Heart left ventricle (tissue), 16 donors: ENCODE measurements at regions of chr5 and their contacts with region 1.

Region 1: DNA sequence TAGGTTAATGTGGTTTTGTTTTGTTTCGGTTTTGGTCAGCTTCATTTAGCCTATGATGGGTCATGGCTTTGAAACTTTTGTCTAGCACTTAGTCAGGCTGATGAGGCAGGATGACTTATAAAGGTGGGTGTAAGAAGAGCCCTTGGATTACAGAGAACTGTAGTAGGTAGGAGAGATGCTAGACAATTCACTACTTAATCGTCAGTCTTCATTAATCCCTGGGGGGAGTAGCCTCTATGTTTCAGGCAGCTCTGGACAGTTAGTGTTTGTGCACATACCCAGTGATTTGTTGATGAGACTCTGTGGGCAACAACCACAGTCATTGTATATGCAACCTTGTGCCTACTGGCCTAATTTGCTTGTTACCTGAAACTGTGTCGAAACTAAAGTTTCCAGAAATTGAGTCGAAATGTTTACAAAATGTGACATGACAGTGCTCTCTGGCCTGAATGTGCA is 113.3 kb downstream of the MTREX start:
- DNase-seq: no peak
- ATAC-seq: no peak
- H3K4me3 ChIP-seq: no peak overlapping the region
- H3K27ac ChIP-seq: peak overlapping the region in 3 of 12 donors; percentile 18 to 46 (median 21)
- H3K4me1 ChIP-seq: peaks cover 0 to 43% (median 15%) of the 10 kb centered on the region in 12 donors
- H3K27me3 ChIP-seq: no peaks in the 10 kb centered on the region
- CTCF ChIP-seq: no peak
- POLR2A ChIP-seq: no peak

Region 2: DNA sequence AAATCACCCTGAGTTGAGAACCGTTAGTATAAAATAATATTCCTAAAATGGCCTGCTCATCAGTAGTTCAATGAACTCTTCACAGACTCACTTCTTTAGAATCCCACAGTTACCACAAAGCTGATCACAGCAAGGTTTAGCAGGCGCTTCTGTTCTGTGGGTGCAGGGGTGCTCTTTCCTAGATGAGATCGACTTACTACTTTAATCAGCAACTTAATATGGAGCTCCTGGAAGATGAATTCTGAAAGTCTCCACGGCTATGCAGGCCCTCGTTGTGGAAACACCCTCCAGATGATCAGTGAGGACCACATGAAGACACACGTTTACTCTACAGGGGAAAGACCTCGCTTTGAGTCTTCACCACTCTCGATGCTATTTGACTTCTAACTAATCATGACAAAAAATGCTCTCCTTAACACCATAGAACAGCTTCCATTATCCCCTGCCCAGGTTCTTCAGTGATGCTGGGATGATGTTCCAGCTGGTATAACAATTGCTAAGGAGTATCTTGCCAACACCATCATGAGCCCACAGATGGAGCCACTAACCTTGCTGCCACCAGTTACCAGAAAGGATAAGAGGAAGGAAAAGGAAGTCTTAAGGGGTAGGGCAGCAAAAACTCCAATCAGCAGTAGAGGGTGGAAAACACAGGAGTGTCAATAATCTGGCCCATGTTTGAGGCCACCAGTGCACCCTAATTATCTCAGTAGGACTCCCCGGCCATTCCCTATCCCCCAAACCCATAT is 279.0 kb before region 1 on chr5:
- intact Hi-C with region 1: no loop called
- DNase-seq: no peak
- ATAC-seq: no peak
- H3K4me3 ChIP-seq: no peak overlapping the region
- H3K27ac ChIP-seq: no peak overlapping the region
- H3K4me1 ChIP-seq: peaks cover 0 to 5% (median 0%) of the 10 kb centered on the region in 12 donors
- H3K27me3 ChIP-seq: peaks cover 0 to 20% (median 3%) of the 10 kb centered on the region in 9 donors
- CTCF ChIP-seq: no peak
- POLR2A ChIP-seq: no peak

Region 3: DNA sequence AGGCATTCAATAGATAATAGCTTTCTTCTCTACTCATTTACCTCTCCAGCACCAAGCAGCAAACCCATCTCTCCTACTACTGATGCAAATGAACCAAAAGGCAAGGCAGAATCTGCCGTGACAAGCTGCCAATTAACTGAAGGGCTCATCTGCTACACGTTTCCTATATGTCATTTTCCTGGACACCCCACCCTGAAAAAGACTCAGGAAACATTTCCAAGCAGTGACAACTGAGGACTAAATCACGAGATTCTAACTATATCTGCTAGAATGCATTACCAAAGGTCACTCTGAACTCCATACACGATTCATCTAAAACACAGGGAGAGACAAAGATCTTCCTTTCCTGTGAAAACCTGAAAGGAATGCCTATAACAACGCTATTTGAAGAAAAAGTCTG is 100.8 kb after region 1 on chr5:
- intact Hi-C with region 1: loop called in 2 of 10 experiments (anchors 5 to 10 kb)
- DNase-seq: no peak
- ATAC-seq: peak in 2 of 4 donors; percentile 37 to 63
- H3K4me3 ChIP-seq: no peak overlapping the region
- H3K27ac ChIP-seq: peak overlapping the region in 5 of 12 donors; percentile 11 to 36 (median 14)
- H3K4me1 ChIP-seq: peaks cover 0 to 71% (median 22%) of the 10 kb centered on the region in 12 donors
- H3K27me3 ChIP-seq: no peaks in the 10 kb centered on the region
- CTCF ChIP-seq: no peak
- POLR2A ChIP-seq: no peak